Activated T-helper 1 cell treated with anti-CD3 and anti-CD28 coated beads, Interleukin-12 subunit alpha, Interleukin-12 subunit beta, Interleukin-2, Interleukin-4 antibody, amounts not matched to agents 30 ng/mL and 10 ng/mL and 1 ng/mL, durations not matched to agents 14 hours and 24 hours and 36 hours (primary cell): ENCODE measurements at regions of chr19 and their contacts with region 1.

Region 1: DNA sequence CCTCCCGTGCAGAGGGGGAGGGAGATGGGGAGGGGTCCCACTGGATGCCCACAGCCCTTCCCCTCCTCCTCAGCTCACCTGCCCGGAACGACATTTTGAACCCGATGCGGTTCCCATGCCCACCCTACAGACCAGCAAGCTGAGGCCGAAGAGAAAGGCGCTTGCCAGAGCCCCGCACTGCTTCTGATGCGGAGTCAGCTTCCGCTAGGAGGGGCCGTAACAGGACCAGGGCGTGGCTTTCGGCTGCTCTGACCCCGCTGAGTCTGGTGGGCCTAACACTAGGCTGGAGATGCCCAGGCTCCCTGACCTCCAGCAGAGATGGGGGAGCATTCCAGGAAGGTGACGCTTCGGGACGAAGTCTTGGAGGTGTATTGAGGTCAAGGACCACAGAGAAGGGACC is 6.7 kb downstream of the ONECUT3 start:
- DNase-seq: no peak
- H3K4me3 Mint-ChIP-seq: no peak overlapping the region
- H3K27ac Mint-ChIP-seq: no peak overlapping the region
- H3K4me1 Mint-ChIP-seq: no peaks in the 10 kb centered on the region
- H3K27me3 Mint-ChIP-seq: peaks cover 70% of the 10 kb centered on the region

Region 2: DNA sequence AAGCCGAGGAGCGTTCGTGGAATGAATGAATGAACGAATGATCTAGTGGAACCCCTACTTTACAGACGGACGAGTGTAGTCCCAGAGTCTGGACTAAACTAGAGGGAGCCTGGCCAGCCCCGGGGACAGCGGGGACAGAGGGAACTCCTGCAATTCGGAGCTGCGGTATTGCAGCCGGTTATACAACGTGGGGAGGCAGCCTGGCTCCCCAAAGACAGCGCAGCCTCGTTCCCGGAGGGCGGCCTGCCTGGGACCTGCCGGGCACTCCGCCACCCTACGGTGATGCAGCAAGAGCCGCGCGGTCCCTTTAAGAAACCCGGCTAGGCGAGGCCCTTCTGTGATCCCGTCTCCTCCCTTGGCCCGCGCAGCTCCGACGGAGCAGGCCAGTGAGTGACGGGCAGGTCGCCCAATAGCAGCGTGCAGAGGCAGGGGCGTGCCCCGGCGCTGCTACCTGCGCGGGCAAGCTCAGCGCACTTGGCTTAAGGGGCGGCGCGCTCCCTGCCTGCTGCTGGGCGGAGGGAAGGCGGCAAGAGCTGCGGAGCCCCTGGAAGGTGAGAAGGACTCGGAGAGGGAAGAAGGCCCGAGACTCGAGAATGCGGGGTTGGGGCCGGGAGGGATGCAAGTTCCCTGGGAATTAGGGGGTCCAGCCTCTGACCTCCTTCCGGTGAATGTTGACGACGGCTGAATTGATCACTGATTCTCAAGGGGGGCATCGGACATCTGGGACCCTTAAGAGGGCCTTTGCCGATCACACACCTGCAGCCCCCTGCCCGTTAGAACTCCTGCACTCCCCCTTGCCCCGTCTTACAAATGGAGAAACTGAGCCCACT is 720.2 kb before region 1 on chr19 and contains the start of gene ABCA7:
- intact Hi-C with region 1: no loop called
- DNase-seq: peak; percentile 100
- H3K4me3 Mint-ChIP-seq: peak within 1 kb of the TSS; percentile 97
- H3K27ac Mint-ChIP-seq: peak within 1 kb of the TSS; percentile 86
- H3K4me1 Mint-ChIP-seq: peaks cover 51% of the 10 kb centered on the region
- H3K27me3 Mint-ChIP-seq: no peaks in the 10 kb centered on the region
- total RNA-seq, gene ABCA7: 15.8 and 18.3 TPM in 2 replicates

Region 3: GRCh38 chr19:1465191-1466016 is 294.6 kb before region 1 on chr19:
- intact Hi-C with region 1: loop called (anchors 5 kb)
- DNase-seq: no peak
- H3K4me3 Mint-ChIP-seq: no peak overlapping the region
- H3K27ac Mint-ChIP-seq: no peak overlapping the region
- H3K4me1 Mint-ChIP-seq: no peaks in the 10 kb centered on the region
- H3K27me3 Mint-ChIP-seq: peaks cover 7% of the 10 kb centered on the region

Region 4: DNA sequence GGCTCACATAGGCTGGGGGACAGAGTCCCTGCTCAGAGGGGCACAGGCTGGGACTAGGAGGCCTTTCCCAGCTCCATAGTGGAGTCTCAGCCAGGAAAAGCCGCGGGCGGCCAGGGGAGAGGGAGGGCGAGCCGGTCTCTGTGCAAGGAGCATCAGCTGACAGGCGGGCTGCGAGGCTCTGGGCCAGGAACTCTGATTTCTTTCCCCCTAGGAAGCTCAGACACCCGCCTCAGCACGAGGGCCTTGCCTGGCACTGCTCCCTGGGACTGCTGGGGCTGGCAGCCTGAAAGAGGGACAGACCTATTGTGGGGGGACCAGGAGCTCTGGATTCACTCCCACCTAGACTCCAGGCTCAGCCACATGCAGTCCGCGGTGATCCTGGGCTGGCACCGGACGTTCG is 238.4 kb before region 1 on chr19:
- intact Hi-C with region 1: no loop called
- DNase-seq: no peak
- H3K4me3 Mint-ChIP-seq: no peak overlapping the region
- H3K27ac Mint-ChIP-seq: no peak overlapping the region
- H3K4me1 Mint-ChIP-seq: no peaks in the 10 kb centered on the region
- H3K27me3 Mint-ChIP-seq: peaks cover 16% of the 10 kb centered on the region